ENCODE measurements at regions of chr1 and their contacts with region 1.

Region 1: GRCh38 chr1:228013935-228014930 is 7.4 kb downstream of the WNT3A start:
- DNase-seq: peak; percentile 77
- H3K4me3 ChIP-seq: no peak overlapping the region
- H3K27ac ChIP-seq: no peak overlapping the region
- H3K4me1 ChIP-seq: peaks cover 26% of the 10 kb centered on the region
- H3K27me3 ChIP-seq: peaks cover 5% of the 10 kb centered on the region
- CTCF ChIP-seq: no peak

Region 2: GRCh38 chr1:228050571-228051231 is 36.5 kb after region 1 on chr1:
- CTCF ChIA-PET with region 1: no interaction called
- dilution Hi-C with region 1: loop called (anchors 5 kb)
- in situ Hi-C with region 1: no loop called
- intact Hi-C with region 1: loop called (anchors 5 kb)
- DNase-seq: no peak
- H3K4me3 ChIP-seq: no peak overlapping the region
- H3K27ac ChIP-seq: no peak overlapping the region
- H3K4me1 ChIP-seq: no peaks in the 10 kb centered on the region
- H3K27me3 ChIP-seq: peaks cover 12% of the 10 kb centered on the region
- CTCF ChIP-seq: no peak

Region 3: GRCh38 chr1:228059634-228060457 is 45.6 kb after region 1 on chr1:
- CTCF ChIA-PET with region 1: no interaction called
- dilution Hi-C with region 1: no loop called
- in situ Hi-C with region 1: no loop called
- intact Hi-C with region 1: loop called (anchors 5 kb)
- DNase-seq: peak; percentile 84
- H3K4me3 ChIP-seq: peak overlapping the region in 2 of 3 experiments; percentile 44 to 46
- H3K27ac ChIP-seq: no peak overlapping the region
- H3K4me1 ChIP-seq: peaks cover 15% of the 10 kb centered on the region
- H3K27me3 ChIP-seq: peaks cover 19% of the 10 kb centered on the region
- CTCF ChIP-seq: no peak

Measured in mammary epithelial cell (primary cell).